ENCODE measurements at regions of chr17 and their contacts with region 1.

Region 1: DNA sequence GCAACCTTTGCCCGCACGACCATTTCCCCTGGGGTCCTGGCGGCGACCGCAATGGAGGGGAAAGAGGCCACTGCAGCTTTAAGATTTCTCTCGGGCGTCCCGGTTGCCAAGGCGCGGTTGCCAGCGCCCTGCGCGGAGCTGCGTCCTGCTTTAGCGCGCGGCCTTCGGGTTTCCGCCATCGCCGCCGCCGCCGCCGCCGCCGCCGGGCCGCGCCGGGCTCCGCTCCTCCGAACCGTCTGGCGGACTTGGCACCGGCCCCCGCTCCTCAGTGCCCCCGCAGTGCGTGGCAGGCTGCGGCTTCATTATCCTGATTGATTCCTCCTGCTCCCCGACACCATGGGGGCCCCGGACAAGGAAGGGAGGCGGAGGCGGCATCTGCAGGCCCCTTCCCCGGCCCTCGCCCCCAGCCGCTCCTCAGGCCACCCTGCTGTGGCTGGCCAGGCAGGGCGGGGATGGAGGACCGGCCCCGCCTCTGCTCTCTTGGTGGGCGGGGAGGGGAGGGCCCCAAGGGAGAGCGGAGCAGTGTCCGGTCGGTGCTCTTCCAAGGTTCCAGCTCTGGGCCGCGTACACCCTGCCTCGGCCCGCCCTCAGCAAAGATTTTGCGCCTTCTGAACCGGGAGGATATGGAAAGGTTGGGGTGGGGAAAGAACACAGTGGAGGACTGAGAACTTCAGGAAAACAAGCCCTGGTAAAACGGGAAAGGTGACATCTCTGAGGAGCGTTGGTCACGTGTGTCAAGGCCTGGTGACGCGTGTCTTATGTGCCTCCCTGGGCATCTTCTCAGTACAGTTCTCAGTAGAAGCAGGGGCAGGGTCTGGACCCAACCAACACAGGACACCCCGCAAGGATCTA is 34.0 kb downstream of the NEUROD2 start:
- DNase-seq: peak; percentile 93
- H3K4me3 Mint-ChIP-seq: peak overlapping the region; percentile 81
- H3K27ac Mint-ChIP-seq: peak overlapping the region; percentile 74
- H3K4me1 Mint-ChIP-seq: peaks cover 7% of the 10 kb centered on the region
- H3K27me3 Mint-ChIP-seq: peaks cover 29% of the 10 kb centered on the region
- CTCF ChIP-seq: no peak

Region 2: GRCh38 chr17:39485555-39485954 is 88.1 kb before region 1 on chr17:
- CTCF ChIA-PET with region 1: interaction called, 12 read pairs
- intact Hi-C with region 1: no loop called
- DNase-seq: peak; percentile 61
- H3K4me3 Mint-ChIP-seq: no peak overlapping the region
- H3K27ac Mint-ChIP-seq: peak overlapping the region; percentile 21
- H3K4me1 Mint-ChIP-seq: no peaks in the 10 kb centered on the region
- H3K27me3 Mint-ChIP-seq: no peaks in the 10 kb centered on the region
- CTCF ChIP-seq: no peak

Region 3: DNA sequence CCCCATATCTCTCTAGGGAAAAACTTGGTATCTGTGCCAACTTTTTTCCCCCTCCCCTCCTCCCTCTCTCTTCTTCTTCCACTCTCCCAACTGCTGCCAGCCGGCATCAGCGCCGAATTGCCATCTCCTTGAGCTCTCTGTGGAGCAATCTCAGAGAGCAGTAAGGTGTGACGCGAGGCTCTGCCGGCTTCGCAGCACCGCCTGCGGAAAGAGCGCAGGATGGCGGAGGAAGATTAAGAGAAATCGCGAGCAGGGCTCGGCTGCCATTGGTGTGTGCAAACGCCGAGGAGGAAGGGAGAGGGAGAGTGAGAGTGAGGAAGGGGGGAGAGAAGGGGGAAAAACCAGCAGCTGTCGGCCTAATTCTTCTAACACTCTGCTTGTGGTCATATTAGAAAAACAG is 10.2 kb before region 1 on chr17:
- CTCF ChIA-PET with region 1: interaction called, 15 read pairs
- intact Hi-C with region 1: no loop called
- DNase-seq: no peak
- H3K4me3 Mint-ChIP-seq: no peak overlapping the region
- H3K27ac Mint-ChIP-seq: no peak overlapping the region
- H3K4me1 Mint-ChIP-seq: no peaks in the 10 kb centered on the region
- H3K27me3 Mint-ChIP-seq: no peaks in the 10 kb centered on the region
- CTCF ChIP-seq: no peak

Region 4: GRCh38 chr17:39591958-39592954 is 18.6 kb after region 1 on chr17:
- CTCF ChIA-PET with region 1: interaction called, 12 read pairs
- intact Hi-C with region 1: no loop called
- DNase-seq: peak; percentile 94
- H3K4me3 Mint-ChIP-seq: no peak overlapping the region
- H3K27ac Mint-ChIP-seq: no peak overlapping the region
- H3K4me1 Mint-ChIP-seq: no peaks in the 10 kb centered on the region
- H3K27me3 Mint-ChIP-seq: peaks cover 100% of the 10 kb centered on the region
- CTCF ChIP-seq: peak; percentile 15